ENCODE measurements at regions of chr10 and their contacts with region 1.

Region 1: GRCh38 chr10:119489991-119490326 is 52.6 kb downstream of the RGS10 start:
- DNase-seq: no peak
- ATAC-seq: no peak
- H3K4me3 Mint-ChIP-seq: peak overlapping the region; percentile 86
- H3K27ac Mint-ChIP-seq: peak overlapping the region; percentile 86
- H3K4me1 Mint-ChIP-seq: peaks cover 15% of the 10 kb centered on the region
- H3K27me3 Mint-ChIP-seq: no peaks in the 10 kb centered on the region
- CTCF ChIP-seq: no peak

Region 2: GRCh38 chr10:119199231-119199992 is 290.5 kb before region 1 on chr10:
- CTCF ChIA-PET with region 1: interaction called, 127 read pairs
- POLR2A ChIA-PET with region 1: interaction called, 3 read pairs
- intact Hi-C with region 1: loop called (anchors 1 kb)
- DNase-seq: no peak
- ATAC-seq: peak; percentile 88
- H3K4me3 Mint-ChIP-seq: no peak overlapping the region
- H3K27ac Mint-ChIP-seq: no peak overlapping the region
- H3K4me1 Mint-ChIP-seq: peaks cover 3% of the 10 kb centered on the region
- H3K27me3 Mint-ChIP-seq: peaks cover 3% of the 10 kb centered on the region
- CTCF ChIP-seq: no peak

Region 3: DNA sequence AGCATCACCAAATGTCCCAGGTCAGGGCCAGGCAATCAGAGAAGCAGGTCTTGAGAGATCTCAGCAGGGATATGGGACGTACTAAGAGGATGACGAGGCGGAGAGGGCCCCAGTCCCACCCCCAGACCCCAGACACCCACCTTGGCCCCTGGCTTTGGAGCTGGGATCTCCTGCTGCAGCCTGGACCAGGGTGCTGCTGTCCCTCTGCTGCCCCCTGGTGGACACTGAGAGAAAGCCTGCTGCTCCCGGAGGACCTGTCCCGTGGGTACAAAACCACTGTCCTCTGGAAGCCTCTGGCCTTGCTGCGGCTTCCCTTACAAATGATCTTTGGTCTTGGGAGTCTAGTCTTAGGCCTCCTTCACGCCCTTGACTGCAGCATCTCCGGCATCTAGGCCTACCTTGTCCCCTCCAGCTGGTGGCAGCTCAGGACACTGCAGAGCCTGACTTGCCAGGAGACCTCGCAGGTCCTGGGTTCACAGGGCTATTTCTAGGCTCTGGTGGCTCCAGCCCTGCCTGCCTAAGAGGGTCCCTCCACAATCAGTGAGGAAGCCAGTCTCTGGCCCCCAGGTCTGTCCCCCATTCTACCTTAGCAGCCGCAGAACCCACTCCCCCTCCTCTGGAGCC is 44.5 kb before region 1 on chr10:
- CTCF ChIA-PET with region 1: interaction called, 74 read pairs
- POLR2A ChIA-PET with region 1: interaction called, 11 read pairs
- intact Hi-C with region 1: loop called (anchors 1 kb)
- DNase-seq: peak; percentile 74
- ATAC-seq: peak; percentile 70
- H3K4me3 Mint-ChIP-seq: no peak overlapping the region
- H3K27ac Mint-ChIP-seq: peak overlapping the region; percentile 61
- H3K4me1 Mint-ChIP-seq: peaks cover 31% of the 10 kb centered on the region
- H3K27me3 Mint-ChIP-seq: no peaks in the 10 kb centered on the region
- CTCF ChIP-seq: peak; percentile 57

Region 4: GRCh38 chr10:119466655-119467054 is 23.3 kb before region 1 on chr10:
- CTCF ChIA-PET with region 1: interaction called, 17 read pairs
- POLR2A ChIA-PET with region 1: interaction called, 6 read pairs
- intact Hi-C with region 1: loop called (anchors 1 kb)
- DNase-seq: no peak
- ATAC-seq: peak; percentile 28
- H3K4me3 Mint-ChIP-seq: no peak overlapping the region
- H3K27ac Mint-ChIP-seq: no peak overlapping the region
- H3K4me1 Mint-ChIP-seq: peaks cover 28% of the 10 kb centered on the region
- H3K27me3 Mint-ChIP-seq: peaks cover 7% of the 10 kb centered on the region
- CTCF ChIP-seq: no peak

Measured in activated B cell treated with CpG ODN at 0.5 μM for 24 hours (primary cell).